ENCODE measurements at regions of chr13 and their contacts with region 1.

Region 1: DNA sequence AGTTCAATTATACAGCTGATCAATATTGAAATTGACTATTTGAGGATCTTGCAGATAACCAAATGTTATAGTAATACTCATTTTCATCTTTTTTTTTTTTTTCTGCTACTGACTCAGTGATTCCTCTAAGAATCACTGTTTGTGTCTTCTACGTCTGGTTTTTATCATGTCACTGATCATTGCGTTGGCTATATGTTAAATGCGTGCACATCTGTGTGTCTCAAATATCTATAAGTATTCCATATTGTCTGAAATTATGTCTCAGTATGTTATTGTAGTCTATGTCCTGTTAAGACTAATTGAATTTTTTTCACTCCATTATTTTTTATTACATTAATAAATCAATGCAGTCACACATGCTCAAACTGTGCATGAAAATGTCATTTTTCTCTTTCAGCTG is 200.5 kb downstream of the PCDH20 start:
- DNase-seq: no peak
- ATAC-seq: no peak
- H3K4me3 ChIP-seq: no peak overlapping the region
- H3K4me3 Mint-ChIP-seq: no peak overlapping the region
- H3K27ac ChIP-seq: no peak overlapping the region
- H3K27ac Mint-ChIP-seq: no peak overlapping the region
- H3K4me1 ChIP-seq: no peaks in the 10 kb centered on the region
- H3K4me1 Mint-ChIP-seq: no peaks in the 10 kb centered on the region
- H3K27me3 ChIP-seq: no peaks in the 10 kb centered on the region
- H3K27me3 Mint-ChIP-seq: no peaks in the 10 kb centered on the region
- CTCF ChIP-seq: no peak

Region 2: GRCh38 chr13:61738236-61738750 is 523.2 kb after region 1 on chr13:
- CTCF ChIA-PET with region 1: no interaction called
- POLR2A ChIA-PET with region 1: no interaction called
- intact Hi-C with region 1: no loop called
- DNase-seq: no peak
- ATAC-seq: no peak
- H3K4me3 ChIP-seq: no peak overlapping the region
- H3K4me3 Mint-ChIP-seq: no peak overlapping the region
- H3K27ac ChIP-seq: no peak overlapping the region
- H3K27ac Mint-ChIP-seq: no peak overlapping the region
- H3K4me1 ChIP-seq: no peaks in the 10 kb centered on the region
- H3K4me1 Mint-ChIP-seq: no peaks in the 10 kb centered on the region
- H3K27me3 ChIP-seq: no peaks in the 10 kb centered on the region
- H3K27me3 Mint-ChIP-seq: no peaks in the 10 kb centered on the region
- CTCF ChIP-seq: no peak

Region 3: DNA sequence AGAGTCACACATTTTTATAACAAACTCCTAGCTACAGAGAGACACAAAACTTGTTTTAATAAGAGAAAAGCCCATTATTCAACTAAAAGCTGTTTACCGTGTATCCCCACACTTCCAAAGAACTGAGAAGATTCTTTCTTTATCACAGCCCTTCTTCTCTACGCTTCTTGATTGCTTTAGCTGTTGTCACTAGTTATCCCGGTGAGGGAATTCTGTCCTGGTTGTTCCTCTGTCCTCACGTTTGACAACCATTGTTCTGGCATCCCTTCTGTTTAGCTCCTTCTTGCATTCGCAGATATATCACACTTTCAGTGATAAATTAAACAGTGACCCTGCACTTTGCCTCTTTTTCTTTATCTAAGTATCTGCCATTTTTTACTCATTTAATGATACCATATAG is 1235.6 kb after region 1 on chr13:
- CTCF ChIA-PET with region 1: no interaction called
- POLR2A ChIA-PET with region 1: no interaction called
- intact Hi-C with region 1: loop called in 1 of 2 experiments (anchors 5 kb)
- DNase-seq: no peak
- ATAC-seq: no peak
- H3K4me3 ChIP-seq: no peak overlapping the region
- H3K4me3 Mint-ChIP-seq: no peak overlapping the region
- H3K27ac ChIP-seq: no peak overlapping the region
- H3K27ac Mint-ChIP-seq: no peak overlapping the region
- H3K4me1 ChIP-seq: no peaks in the 10 kb centered on the region
- H3K4me1 Mint-ChIP-seq: no peaks in the 10 kb centered on the region
- H3K27me3 ChIP-seq: no peaks in the 10 kb centered on the region
- H3K27me3 Mint-ChIP-seq: no peaks in the 10 kb centered on the region
- CTCF ChIP-seq: no peak